ENCODE measurements at regions of chr2 and their contacts with region 1.

Region 1: DNA sequence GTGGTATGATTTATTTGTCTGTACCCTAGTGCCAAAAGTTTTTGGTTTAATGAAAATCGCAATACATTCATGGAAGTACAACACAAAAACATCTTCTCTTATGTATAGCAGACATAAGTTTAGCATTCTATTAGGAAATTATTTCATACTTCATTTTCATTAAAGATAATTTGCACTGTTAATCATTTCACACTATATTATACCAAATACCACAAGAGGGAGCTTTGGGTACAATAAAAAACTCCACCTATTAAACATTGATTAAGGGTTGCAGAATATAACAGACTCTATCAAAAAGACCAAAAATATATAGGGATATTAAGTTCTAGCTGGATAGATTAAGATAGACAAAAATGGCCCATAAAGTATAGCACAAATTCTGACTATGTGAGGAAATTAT is 79.0 kb downstream of the SLC66A3 start:
- DNase-seq: peak; percentile 36
- H3K4me3 Mint-ChIP-seq: no peak overlapping the region
- H3K27ac Mint-ChIP-seq: no peak overlapping the region
- H3K4me1 Mint-ChIP-seq: no peaks in the 10 kb centered on the region
- H3K27me3 Mint-ChIP-seq: no peaks in the 10 kb centered on the region
- CTCF ChIP-seq: peak; percentile 64

Region 2: DNA sequence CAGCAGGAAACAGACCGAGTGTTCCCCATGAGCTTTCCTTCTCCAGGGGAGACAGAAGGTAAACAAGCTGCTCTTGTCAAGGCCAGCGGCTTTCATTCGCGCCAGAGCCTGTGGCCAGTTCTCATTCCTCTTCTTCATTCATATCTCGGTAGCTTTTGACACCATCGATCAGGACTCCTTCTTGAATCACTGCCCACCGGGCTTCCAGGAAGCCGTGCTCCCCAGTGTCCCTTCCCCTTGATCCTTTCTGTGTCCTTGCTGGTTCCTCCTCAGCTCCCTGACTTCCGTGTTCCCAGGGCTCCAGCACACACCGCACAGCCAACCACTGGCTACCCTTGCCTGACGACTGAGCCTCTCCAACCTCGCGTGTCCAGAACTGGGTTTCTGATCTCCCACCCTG is 65.0 kb before region 1 on chr2:
- CTCF ChIA-PET with region 1: no interaction called
- POLR2A ChIA-PET with region 1: no interaction called
- intact Hi-C with region 1: no loop called
- DNase-seq: no peak
- H3K4me3 Mint-ChIP-seq: no peak overlapping the region
- H3K27ac Mint-ChIP-seq: no peak overlapping the region
- H3K4me1 Mint-ChIP-seq: no peaks in the 10 kb centered on the region
- H3K27me3 Mint-ChIP-seq: no peaks in the 10 kb centered on the region
- CTCF ChIP-seq: no peak

Region 3: GRCh38 chr2:11203480-11203879 is 30.8 kb before region 1 on chr2:
- CTCF ChIA-PET with region 1: no interaction called
- POLR2A ChIA-PET with region 1: no interaction called
- intact Hi-C with region 1: no loop called
- DNase-seq: peak; percentile 35
- H3K4me3 Mint-ChIP-seq: no peak overlapping the region
- H3K27ac Mint-ChIP-seq: no peak overlapping the region
- H3K4me1 Mint-ChIP-seq: peaks cover 6% of the 10 kb centered on the region
- H3K27me3 Mint-ChIP-seq: no peaks in the 10 kb centered on the region
- CTCF ChIP-seq: no peak

Region 4: GRCh38 chr2:11411768-11412448 is 177.6 kb after region 1 on chr2:
- CTCF ChIA-PET with region 1: interaction called, 39 read pairs
- POLR2A ChIA-PET with region 1: interaction called, 3 read pairs
- intact Hi-C with region 1: loop called (anchors 1 kb)
- DNase-seq: peak; percentile 43
- H3K4me3 Mint-ChIP-seq: no peak overlapping the region
- H3K27ac Mint-ChIP-seq: no peak overlapping the region
- H3K4me1 Mint-ChIP-seq: peaks cover 6% of the 10 kb centered on the region
- H3K27me3 Mint-ChIP-seq: no peaks in the 10 kb centered on the region
- CTCF ChIP-seq: peak; percentile 84

Measured in MCF 10A (cell line).